ENCODE measurements at regions of chr16 and their contacts with region 1.

Region 1: GRCh38 chr16:4583906-4584305 is 27.8 kb downstream of the C16orf96 start:
- DNase-seq: no peak
- H3K4me3 ChIP-seq: no peak overlapping the region
- H3K27ac ChIP-seq: no peak overlapping the region
- H3K4me1 ChIP-seq: no peaks in the 10 kb centered on the region
- H3K27me3 ChIP-seq: no peaks in the 10 kb centered on the region
- CTCF ChIP-seq: no peak

Region 2: DNA sequence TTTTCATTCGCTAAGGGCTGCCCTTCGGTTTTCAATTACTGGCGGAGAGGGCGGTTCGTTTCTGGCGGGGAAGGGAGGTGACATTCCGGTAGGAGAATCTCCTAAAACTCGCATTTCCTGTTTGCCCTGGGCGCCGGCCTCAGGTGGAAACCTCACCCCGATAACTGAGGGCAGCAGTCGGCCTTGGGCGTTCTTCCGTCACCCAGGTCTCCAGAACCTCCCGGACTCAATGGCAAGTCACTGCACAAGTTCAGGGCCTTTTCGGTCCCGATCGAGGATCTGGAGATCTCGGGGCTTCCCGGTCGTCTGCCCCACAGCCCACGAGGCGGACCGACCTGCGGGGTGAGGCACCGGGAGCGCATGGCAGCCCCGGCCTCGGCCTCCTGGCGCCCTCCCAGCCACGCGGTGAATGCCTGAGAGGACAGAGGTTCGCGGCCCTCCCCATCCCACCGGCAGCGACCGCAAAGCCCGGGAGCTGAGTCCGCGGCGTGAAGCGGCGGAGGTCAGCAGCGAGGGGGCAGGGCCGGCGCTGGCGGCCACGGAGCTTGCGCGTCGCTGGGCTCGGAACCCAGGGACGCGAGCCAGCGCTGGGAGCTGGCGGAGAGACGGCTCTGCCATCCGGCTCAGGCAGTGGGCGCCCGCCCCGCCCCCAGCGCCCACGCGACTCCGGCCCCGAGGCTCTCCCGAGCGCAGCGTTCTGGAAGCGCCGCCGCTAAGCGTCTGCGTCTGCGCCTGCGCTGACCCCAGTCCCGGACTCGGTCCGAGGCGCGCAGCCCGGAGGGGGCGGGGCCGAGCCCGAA is 400.5 kb before region 1 on chr16:
- CTCF ChIA-PET with region 1: no interaction called
- POLR2A ChIA-PET with region 1: no interaction called
- intact Hi-C with region 1: no loop called
- DNase-seq: peak; percentile 94
- H3K4me3 ChIP-seq: peak overlapping the region; percentile 63
- H3K27ac ChIP-seq: peak overlapping the region; percentile 82
- H3K4me1 ChIP-seq: no peaks in the 10 kb centered on the region
- H3K27me3 ChIP-seq: no peaks in the 10 kb centered on the region
- CTCF ChIP-seq: no peak

Region 3: GRCh38 chr16:4487955-4488498 is 95.9 kb before region 1 on chr16:
- CTCF ChIA-PET with region 1: no interaction called
- POLR2A ChIA-PET with region 1: no interaction called
- intact Hi-C with region 1: no loop called
- DNase-seq: no peak
- H3K4me3 ChIP-seq: no peak overlapping the region
- H3K27ac ChIP-seq: no peak overlapping the region
- H3K4me1 ChIP-seq: no peaks in the 10 kb centered on the region
- H3K27me3 ChIP-seq: no peaks in the 10 kb centered on the region
- CTCF ChIP-seq: no peak

Region 4: DNA sequence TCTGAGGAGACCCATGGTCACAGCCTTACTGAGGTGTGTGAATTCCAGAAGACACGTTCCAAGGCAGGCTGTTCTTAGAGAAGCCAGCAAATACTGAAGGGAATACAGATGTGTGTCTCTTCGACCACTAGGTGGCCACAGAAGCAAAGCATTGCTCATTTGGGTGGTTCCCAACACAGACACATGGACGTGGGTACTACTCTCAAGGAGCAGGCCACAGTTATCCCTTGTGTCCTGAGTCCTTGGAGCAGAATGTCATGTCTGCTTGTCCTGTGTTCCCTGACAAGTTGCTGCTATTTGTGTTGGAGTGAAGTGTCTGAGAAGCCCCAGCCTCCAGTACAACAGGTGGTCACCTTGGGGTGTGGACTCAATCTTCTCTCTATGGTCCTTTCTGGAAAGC is 77.5 kb before region 1 on chr16:
- CTCF ChIA-PET with region 1: interaction called, 6 read pairs
- POLR2A ChIA-PET with region 1: no interaction called
- intact Hi-C with region 1: loop called (anchors 2 kb)
- DNase-seq: peak; percentile 84
- H3K4me3 ChIP-seq: no peak overlapping the region
- H3K27ac ChIP-seq: no peak overlapping the region
- H3K4me1 ChIP-seq: no peaks in the 10 kb centered on the region
- H3K27me3 ChIP-seq: no peaks in the 10 kb centered on the region
- CTCF ChIP-seq: peak; percentile 84

Region 5: DNA sequence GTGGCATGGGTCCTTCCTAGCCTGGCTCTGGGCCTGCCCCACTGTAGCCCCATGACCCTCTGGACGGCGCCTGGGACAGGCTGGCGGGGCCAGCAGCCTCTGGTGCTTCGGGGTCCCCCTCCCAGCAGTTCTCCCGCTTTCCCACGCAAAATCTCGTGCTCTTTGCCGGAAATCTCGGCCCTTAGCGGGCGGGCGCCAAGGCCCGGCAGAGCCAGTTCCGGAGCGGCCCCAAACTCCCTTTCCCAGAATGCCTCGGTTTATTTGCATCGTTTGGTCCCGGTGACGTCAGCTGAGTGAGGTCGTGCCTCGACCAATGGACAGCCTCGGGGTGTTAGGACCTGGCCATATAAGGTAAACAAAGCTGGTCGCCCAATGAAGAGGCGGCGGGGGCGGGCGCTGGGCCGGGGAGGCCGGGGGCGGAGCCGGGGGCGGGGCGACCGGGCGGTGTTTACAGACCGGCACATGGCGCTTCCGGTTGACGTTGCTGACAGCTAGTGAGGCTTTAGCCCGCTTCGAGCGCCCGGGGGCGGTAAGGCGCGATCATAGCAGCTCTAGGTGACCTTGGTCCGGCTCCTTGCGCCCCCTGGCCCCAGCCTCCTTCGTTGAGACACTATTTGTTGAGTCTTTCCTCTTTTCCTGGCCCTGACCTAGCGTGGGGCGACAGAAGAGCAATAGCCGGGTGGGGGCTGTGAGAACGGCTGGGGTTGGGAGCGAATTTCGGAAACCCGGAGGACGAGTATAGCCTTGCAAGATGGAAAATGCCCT is 32.3 kb after region 1 on chr16:
- CTCF ChIA-PET with region 1: interaction called, 10 read pairs
- POLR2A ChIA-PET with region 1: no interaction called
- intact Hi-C with region 1: no loop called
- DNase-seq: peak; percentile 100
- H3K4me3 ChIP-seq: peak overlapping the region; percentile 59
- H3K27ac ChIP-seq: peak overlapping the region; percentile 99
- H3K4me1 ChIP-seq: peaks cover 20% of the 10 kb centered on the region
- H3K27me3 ChIP-seq: no peaks in the 10 kb centered on the region
- CTCF ChIP-seq: peak; percentile 43

Region 6: GRCh38 chr16:5071681-5072333 is 487.9 kb after region 1 on chr16 and contains the start of gene ALG1:
- CTCF ChIA-PET with region 1: no interaction called
- POLR2A ChIA-PET with region 1: no interaction called
- intact Hi-C with region 1: no loop called
- DNase-seq: peak; percentile 91
- H3K4me3 ChIP-seq: peak within 1 kb of the TSS; percentile 69
- H3K27ac ChIP-seq: peak within 1 kb of the TSS; percentile 57
- H3K4me1 ChIP-seq: peaks cover 3% of the 10 kb centered on the region
- H3K27me3 ChIP-seq: peaks cover 12% of the 10 kb centered on the region
- CTCF ChIP-seq: no peak
- total RNA-seq, gene ALG1: 29.5 and 29.8 TPM in 2 replicates

Measured in A673 (cell line).